Activated T-helper 2 cell treated with anti-CD3 and anti-CD28 coated beads, Interferon-gamma antibody, Interleukin-2, Interleukin-4, amounts not matched to agents 10 μg/mL and 5 μg/mL and 100 μg/mL, durations not matched to agents 14 hours and 24 hours and 36 hours (primary cell): ENCODE measurements at regions of chr3 and their contacts with region 1.

Region 1: GRCh38 chr3:51498876-51499738 is 708 bp downstream of the DCAF1 start:
- DNase-seq: peak; percentile 85
- H3K4me3 Mint-ChIP-seq: peak overlapping the region; percentile 98
- H3K27ac Mint-ChIP-seq: peak overlapping the region; percentile 97
- H3K4me1 Mint-ChIP-seq: peaks cover 11% of the 10 kb centered on the region
- H3K27me3 Mint-ChIP-seq: no peaks in the 10 kb centered on the region

Region 2: GRCh38 chr3:51391075-51391567 is 108.0 kb before region 1 on chr3 and contains the start of gene RBM15B:
- intact Hi-C with region 1: loop called (anchors 1 kb)
- DNase-seq: peak; percentile 97
- H3K4me3 Mint-ChIP-seq: peak within 1 kb of the TSS; percentile 82
- H3K27ac Mint-ChIP-seq: peak within 1 kb of the TSS; percentile 83
- H3K4me1 Mint-ChIP-seq: peaks cover 54% of the 10 kb centered on the region
- H3K27me3 Mint-ChIP-seq: no peaks in the 10 kb centered on the region
- total RNA-seq, gene RBM15B: 36.1 and 37.4 TPM in 2 replicates

Region 3: DNA sequence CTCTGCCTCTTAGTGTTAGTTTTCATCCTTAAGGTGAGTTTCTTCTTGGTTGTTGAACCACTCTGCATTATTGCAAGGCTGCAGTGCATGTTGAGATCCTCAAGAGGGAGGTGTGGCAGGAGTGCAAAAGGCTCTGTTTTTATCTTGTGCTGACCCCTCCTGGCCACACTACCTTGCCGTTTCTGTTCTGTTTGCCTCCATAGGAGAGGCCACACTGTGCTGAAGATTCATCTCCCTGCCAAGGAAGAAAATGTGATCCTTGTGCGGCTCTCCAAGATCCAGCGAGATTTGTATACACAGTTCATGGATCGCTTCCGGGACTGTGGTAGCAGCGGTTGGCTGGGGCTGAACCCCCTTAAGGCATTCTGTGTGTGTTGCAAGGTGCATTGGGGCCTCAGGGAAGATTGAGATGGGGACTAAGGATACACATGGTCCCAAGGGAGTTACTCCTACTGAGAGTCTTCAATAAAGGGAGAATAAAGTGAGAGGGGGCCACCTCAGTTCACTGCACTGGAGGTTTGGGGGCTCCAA is 138.9 kb after region 1 on chr3:
- intact Hi-C with region 1: loop called (anchors 1 kb)
- DNase-seq: peak; percentile 10
- H3K4me3 Mint-ChIP-seq: no peak overlapping the region
- H3K27ac Mint-ChIP-seq: no peak overlapping the region
- H3K4me1 Mint-ChIP-seq: no peaks in the 10 kb centered on the region
- H3K27me3 Mint-ChIP-seq: no peaks in the 10 kb centered on the region

Region 4: DNA sequence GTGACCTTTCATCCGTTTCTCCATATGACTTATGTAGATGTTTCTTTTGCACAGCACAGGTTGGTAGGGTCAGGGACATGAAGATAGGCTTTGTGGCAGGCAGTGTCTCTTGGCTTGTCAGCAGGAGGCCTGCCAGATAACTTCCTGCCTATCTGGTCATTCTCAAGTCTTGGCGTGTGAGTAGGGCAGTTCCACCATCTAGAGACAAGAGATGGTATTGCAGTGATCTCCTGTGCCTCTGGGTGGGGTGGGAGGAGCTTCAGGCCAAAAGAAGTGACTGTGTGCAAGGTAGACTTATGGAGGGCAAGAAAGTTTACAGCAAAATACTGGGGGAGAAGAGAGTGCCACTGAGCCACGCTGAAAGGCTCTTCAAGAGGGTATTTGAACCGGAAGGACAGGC is 183.0 kb after region 1 on chr3:
- intact Hi-C with region 1: loop called (anchors 1 kb)
- DNase-seq: peak; percentile 78
- H3K4me3 Mint-ChIP-seq: peak overlapping the region; percentile 70
- H3K27ac Mint-ChIP-seq: peak overlapping the region; percentile 68
- H3K4me1 Mint-ChIP-seq: peaks cover 73% of the 10 kb centered on the region
- H3K27me3 Mint-ChIP-seq: no peaks in the 10 kb centered on the region